Heart right ventricle (tissue), 16 donors: ENCODE measurements at regions of chr10 and their contacts with region 1.

Region 1: GRCh38 chr10:116385994-116386809 is 41.4 kb upstream of the PNLIPRP3 start:
- DNase-seq: no peak
- ATAC-seq: no peak
- H3K4me3 ChIP-seq: no peak overlapping the region
- H3K27ac ChIP-seq: no peak overlapping the region
- H3K4me1 ChIP-seq: no peaks in the 10 kb centered on the region
- H3K27me3 ChIP-seq: peaks cover 0 to 5% (median 0%) of the 10 kb centered on the region in 7 donors
- CTCF ChIP-seq: peak; percentile 11 to 67 (median 59)

Region 2: DNA sequence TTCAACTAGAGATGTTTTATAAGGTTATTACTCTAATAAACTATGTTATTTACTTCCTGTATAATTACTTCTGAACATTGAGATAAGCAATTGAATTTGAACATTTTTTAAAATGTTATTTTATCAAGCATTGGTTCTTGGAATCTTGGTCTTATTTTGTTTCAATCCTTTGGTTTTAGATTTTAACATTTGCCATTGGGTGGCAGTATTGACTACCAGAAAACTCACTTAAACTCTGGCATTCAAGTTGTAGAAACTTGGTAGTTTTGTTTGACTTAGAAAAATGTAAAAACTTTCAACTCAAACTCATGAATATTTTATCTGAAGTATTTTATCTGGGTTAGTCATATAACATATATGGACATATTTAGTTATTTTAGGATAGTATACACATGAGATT is 1244.9 kb before region 1 on chr10:
- intact Hi-C with region 1: loop called in 2 of 10 experiments (anchors 10 kb)
- DNase-seq: no peak
- ATAC-seq: no peak
- H3K4me3 ChIP-seq: no peak overlapping the region
- H3K27ac ChIP-seq: no peak overlapping the region
- H3K4me1 ChIP-seq: no peaks in the 10 kb centered on the region
- H3K27me3 ChIP-seq: peaks cover 0 to 5% (median 0%) of the 10 kb centered on the region in 7 donors
- CTCF ChIP-seq: peak in 6 of 9 donors; percentile 16 to 51 (median 36)

Region 3: DNA sequence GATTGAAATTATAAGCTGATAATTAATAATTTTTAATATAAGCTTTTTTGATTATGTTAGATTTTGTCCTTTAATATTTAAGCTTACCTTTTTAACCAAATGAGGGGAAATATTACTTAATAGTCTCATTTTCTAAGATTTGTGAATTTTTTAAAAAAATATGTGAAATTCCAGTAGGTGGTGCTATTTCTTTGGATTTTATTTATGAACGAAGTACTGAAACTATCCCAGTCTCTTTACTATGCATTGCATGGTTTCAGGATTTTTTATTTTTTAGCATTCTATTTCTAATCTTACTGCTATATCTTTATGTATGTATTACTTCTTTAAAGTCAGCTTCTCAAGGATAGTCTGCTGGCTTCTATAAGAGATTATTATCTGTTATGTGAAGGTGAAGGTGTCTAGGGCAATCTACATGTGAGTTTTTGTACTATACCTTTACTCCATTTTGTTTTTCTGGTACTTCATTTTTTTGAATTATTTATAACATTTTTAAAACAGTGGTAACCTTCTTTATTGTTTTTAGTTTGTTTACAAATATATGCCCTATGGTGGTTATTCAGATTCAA is 1214.7 kb before region 1 on chr10:
- intact Hi-C with region 1: loop called in 2 of 10 experiments (anchors 5 to 10 kb)
- DNase-seq: no peak
- ATAC-seq: no peak
- H3K4me3 ChIP-seq: no peak overlapping the region
- H3K27ac ChIP-seq: no peak overlapping the region
- H3K4me1 ChIP-seq: no peaks in the 10 kb centered on the region
- H3K27me3 ChIP-seq: no peaks in the 10 kb centered on the region
- CTCF ChIP-seq: peak in 7 of 9 donors; percentile 16 to 53 (median 43)

Region 4: GRCh38 chr10:115355162-115355760 is 1030.9 kb before region 1 on chr10:
- intact Hi-C with region 1: loop called in 7 of 10 experiments (anchors 5 to 10 kb)
- DNase-seq: no peak
- ATAC-seq: peak in 1 of 8 donors; percentile 53
- H3K4me3 ChIP-seq: no peak overlapping the region
- H3K27ac ChIP-seq: no peak overlapping the region
- H3K4me1 ChIP-seq: no peaks in the 10 kb centered on the region
- H3K27me3 ChIP-seq: no peaks in the 10 kb centered on the region
- CTCF ChIP-seq: peak; percentile 11 to 57 (median 49)

Region 5: DNA sequence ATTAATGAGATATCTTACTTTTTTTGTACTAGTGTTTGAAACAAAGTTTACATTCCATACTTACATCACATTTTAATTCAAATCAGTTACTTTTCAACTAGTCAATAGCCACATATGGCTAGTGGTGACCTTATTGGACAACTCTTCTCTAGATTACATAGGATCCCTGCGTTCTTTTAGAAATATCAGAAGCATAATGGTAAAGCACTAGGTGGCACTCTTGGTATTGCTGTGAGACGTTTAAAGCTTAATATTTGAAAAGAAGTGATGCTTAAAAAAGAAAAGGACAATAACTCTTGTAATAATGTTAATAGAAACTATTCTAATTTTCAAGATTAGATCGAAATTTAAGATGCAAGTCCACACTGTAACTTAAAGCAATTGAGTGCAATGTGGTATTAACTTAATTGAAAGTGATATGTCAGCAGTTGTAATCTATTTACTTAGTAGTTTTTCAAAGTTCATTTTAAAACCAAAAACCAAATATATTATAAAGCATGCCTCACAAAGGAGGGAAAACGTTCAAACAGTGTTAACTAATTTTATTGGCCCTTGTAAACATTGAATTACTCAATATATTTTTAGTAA is 953.9 kb before region 1 on chr10:
- intact Hi-C with region 1: loop called in 1 of 10 experiments (anchors 10 kb)
- DNase-seq: no peak
- ATAC-seq: no peak
- H3K4me3 ChIP-seq: no peak overlapping the region
- H3K27ac ChIP-seq: no peak overlapping the region
- H3K4me1 ChIP-seq: no peaks in the 10 kb centered on the region
- H3K27me3 ChIP-seq: no peaks in the 10 kb centered on the region
- CTCF ChIP-seq: peak in 5 of 9 donors; percentile 18 to 42 (median 23)

Region 6: DNA sequence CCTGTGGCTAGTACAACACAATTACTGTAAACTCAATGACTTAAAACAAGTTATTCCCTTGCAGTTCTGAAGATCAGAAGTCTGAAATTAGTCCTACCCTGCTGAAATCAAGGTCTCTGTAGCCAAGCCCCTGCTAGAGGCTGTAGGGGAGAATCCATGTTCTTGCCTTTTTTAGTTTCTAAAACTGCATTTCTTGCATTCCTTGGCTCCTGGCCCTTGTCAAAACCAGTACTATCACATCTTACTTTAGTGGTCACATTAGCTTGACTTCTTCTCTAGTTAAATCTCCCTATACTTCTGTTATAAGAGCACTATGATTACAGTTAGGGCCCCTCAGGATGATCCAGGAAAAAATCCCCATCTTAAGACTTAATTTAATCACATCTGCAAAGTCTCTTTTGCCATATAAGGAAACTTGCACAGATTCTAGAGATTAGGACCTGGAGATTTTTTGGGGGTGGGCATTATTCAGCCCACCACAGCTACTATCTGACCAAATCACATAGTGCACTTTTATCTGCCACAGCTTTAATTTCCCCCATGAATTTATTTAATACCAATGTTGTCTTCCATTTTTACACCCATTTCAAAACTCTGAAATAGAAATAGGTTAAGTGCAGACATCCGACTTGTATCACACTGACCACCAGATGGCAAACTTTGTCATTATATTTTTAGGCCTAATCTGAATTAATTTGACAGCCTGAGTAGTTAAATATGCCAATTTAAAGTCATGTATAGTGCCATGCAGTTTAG is 680.0 kb before region 1 on chr10:
- intact Hi-C with region 1: loop called in 4 of 10 experiments (anchors 5 to 10 kb)
- DNase-seq: no peak
- ATAC-seq: no peak
- H3K4me3 ChIP-seq: no peak overlapping the region
- H3K27ac ChIP-seq: no peak overlapping the region
- H3K4me1 ChIP-seq: no peaks in the 10 kb centered on the region
- H3K27me3 ChIP-seq: no peaks in the 10 kb centered on the region
- CTCF ChIP-seq: peak in 8 of 9 donors; percentile 7 to 58 (median 47)

Region 7: DNA sequence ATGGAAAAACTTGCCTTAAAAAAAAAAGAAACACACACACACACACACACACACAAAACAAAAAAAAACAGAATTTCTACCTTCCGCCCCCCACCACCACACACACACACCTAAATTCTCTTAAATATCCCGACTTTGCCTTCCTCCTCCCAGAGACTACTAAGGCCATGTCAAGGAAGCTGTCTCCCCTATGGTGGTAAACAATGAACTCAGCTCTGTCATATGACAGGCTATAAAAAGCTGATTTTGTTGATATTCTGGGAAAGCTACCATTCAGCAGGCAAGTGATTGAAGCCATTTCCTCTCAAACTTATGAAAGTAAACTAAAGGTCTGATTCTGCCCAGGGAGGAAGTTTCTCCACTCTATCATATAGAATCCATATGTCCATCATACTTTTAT is 584.2 kb before region 1 on chr10:
- intact Hi-C with region 1: loop called in 2 of 10 experiments (anchors 5 to 10 kb)
- DNase-seq: no peak
- ATAC-seq: no peak
- H3K4me3 ChIP-seq: no peak overlapping the region
- H3K27ac ChIP-seq: no peak overlapping the region
- H3K4me1 ChIP-seq: no peaks in the 10 kb centered on the region
- H3K27me3 ChIP-seq: no peaks in the 10 kb centered on the region
- CTCF ChIP-seq: no peak

Region 8: GRCh38 chr10:116521404-116522290 is 135.4 kb after region 1 on chr10:
- intact Hi-C with region 1: no loop called
- DNase-seq: peak in 1 of 2 donors; percentile 7
- ATAC-seq: no peak
- H3K4me3 ChIP-seq: no peak overlapping the region
- H3K27ac ChIP-seq: no peak overlapping the region
- H3K4me1 ChIP-seq: no peaks in the 10 kb centered on the region
- H3K27me3 ChIP-seq: peaks cover 0 to 33% (median 11%) of the 10 kb centered on the region in 7 donors
- CTCF ChIP-seq: peak; percentile 48 to 85 (median 79)